AG04450 (cell line): ENCODE measurements at regions of chr14 and their contacts with region 1.

Region 1: GRCh38 chr14:67526676-67527459 is 6.2 kb upstream of the PLEKHH1 start:
- DNase-seq: no peak
- H3K4me3 ChIP-seq: no peak overlapping the region
- H3K27ac ChIP-seq: no peak overlapping the region
- H3K27me3 ChIP-seq: peaks cover 38% of the 10 kb centered on the region
- CTCF ChIP-seq: peak; percentile 72

Region 2: GRCh38 chr14:67426983-67427606 is 99.8 kb before region 1 on chr14:
- CTCF ChIA-PET with region 1: interaction called, 13 read pairs
- POLR2A ChIA-PET with region 1: no interaction called
- DNase-seq: peak; percentile 45
- H3K4me3 ChIP-seq: no peak overlapping the region
- H3K27ac ChIP-seq: no peak overlapping the region
- H3K27me3 ChIP-seq: peaks cover 10% of the 10 kb centered on the region
- CTCF ChIP-seq: peak; percentile 86

Region 3: DNA sequence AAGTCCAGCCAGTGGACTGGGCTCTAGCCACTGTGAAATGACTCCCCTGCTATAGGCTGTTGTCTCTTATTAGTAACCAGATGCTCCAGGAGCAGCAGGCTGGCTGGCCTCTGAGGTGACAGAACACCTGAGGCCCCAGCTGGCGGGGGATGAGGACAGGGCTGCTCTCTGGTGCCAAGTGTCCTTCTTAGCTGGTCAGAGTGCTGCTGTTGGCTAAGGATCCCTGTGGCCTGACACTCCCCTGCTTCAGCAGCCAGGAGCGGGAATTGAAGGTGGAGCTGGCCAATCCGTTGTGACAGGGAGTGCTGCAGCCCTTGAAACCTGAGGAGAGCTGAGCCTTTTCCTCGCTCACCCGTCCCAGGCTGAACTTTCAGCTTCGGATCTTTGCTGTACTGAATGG is 69.1 kb before region 1 on chr14:
- CTCF ChIA-PET with region 1: no interaction called
- POLR2A ChIA-PET with region 1: no interaction called
- DNase-seq: no peak
- H3K4me3 ChIP-seq: no peak overlapping the region
- H3K27ac ChIP-seq: no peak overlapping the region
- H3K27me3 ChIP-seq: peaks cover 35% of the 10 kb centered on the region
- CTCF ChIP-seq: no peak

Region 4: GRCh38 chr14:67515386-67516079 is 11.3 kb before region 1 on chr14:
- CTCF ChIA-PET with region 1: interaction called, 32 read pairs
- POLR2A ChIA-PET with region 1: no interaction called
- DNase-seq: no peak
- H3K4me3 ChIP-seq: peak overlapping the region; percentile 65
- H3K27ac ChIP-seq: no peak overlapping the region
- H3K27me3 ChIP-seq: peaks cover 65% of the 10 kb centered on the region
- CTCF ChIP-seq: no peak

Region 5: DNA sequence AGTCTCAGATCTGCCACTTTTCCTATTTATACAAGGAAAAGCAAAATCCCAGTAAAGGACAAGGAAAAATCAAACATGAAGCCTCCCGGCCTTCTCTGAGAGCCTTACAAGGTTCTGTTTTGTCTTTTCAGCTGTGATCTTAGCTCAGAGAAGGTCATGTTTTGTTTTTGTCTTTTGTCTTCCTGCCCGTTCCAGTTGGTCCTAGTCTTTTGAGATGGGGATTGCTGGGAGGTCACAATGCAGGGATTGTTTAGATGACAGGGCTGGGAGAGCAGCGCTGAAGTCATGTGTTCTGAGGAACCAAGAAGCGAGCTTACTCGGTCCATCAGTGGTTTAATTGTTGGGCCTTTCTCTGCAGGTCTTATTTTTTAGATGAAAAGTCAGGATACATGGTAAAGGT is 12.2 kb after region 1 on chr14:
- CTCF ChIA-PET with region 1: interaction called, 13 read pairs
- POLR2A ChIA-PET with region 1: no interaction called
- DNase-seq: no peak
- H3K4me3 ChIP-seq: no peak overlapping the region
- H3K27ac ChIP-seq: no peak overlapping the region
- H3K27me3 ChIP-seq: peaks cover 31% of the 10 kb centered on the region
- CTCF ChIP-seq: no peak

Region 6: GRCh38 chr14:67583711-67584644 is 57.1 kb after region 1 on chr14:
- CTCF ChIA-PET with region 1: interaction called, 10 read pairs
- POLR2A ChIA-PET with region 1: no interaction called
- DNase-seq: no peak
- H3K4me3 ChIP-seq: no peak overlapping the region
- H3K27ac ChIP-seq: no peak overlapping the region
- H3K27me3 ChIP-seq: peaks cover 5% of the 10 kb centered on the region
- CTCF ChIP-seq: peak; percentile 85

Region 7: DNA sequence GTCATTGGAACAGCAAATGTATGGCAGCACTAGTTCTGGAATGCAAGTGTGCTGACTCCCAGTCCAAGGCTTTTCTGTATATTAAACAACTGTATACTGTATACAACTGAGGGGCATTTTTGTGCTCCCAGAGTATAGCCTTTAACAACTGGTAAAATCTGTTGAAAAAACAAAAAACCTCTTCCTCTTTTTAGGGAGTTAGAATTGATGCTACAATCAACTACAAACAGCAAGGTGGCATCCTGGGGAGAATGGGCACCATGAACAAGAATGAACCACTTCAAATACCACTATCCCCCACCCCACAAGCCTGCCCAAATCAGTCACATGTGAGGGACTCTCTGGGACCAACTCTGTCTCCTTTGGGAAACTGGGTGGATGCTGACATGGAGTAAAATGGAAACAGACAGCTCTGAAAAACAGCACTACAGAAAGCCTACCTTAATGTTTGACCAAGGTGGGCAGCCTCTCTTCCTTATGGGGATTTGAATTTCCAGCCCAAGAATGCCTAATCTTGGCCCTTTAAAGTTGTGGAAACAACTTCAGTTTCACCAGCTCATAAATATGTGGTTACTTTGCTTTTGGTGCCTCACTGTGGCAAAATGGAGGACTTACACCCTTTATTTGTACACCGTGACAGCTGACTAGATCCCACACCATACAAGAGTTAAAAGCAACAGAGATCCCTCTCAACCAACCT is 140.0 kb after region 1 on chr14:
- CTCF ChIA-PET with region 1: interaction called, 19 read pairs
- POLR2A ChIA-PET with region 1: no interaction called
- DNase-seq: peak; percentile 43
- H3K4me3 ChIP-seq: no peak overlapping the region
- H3K27ac ChIP-seq: no peak overlapping the region
- H3K27me3 ChIP-seq: no peaks in the 10 kb centered on the region
- CTCF ChIP-seq: peak; percentile 70